ENCODE measurements at regions of chr7 and their contacts with region 1.

Region 1: DNA sequence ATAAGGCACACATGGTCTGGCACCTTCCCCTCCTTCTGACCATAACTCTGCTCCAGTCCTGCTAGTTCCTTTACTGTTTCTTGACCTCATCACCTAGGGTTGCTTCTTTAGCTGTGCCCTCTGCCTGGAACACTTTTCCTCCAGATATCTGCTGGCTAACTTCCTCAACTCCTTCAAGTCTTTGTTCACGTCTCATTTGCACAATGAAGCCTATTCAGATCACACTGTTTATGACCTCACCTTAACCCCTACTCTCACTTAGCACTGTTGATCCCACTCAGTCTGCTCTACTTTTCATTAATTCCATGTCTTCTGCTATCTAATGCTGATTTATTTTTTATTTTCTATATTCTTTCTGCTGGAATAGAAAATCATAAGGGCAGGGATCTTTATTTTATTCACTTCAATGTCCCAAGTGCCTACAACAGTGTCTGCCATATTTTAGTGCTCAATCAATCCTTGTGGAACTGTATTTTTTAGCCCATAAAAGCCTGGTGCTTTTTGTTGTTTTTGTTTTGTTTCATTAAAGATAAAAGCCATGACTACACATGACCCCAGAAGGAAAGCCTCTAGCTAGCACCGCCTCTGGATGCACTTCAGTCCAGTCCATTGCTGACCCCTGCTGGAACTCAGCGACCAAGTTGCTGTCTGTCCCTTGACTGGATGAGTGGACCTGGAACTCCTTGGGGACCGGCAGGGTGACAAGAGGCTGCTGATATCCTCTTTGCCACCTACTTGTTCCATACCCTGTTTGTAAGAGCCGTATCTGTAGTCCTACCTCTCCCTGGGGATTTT is 12.3 kb downstream of the KLF14 start:
- DNase-seq: peak; percentile 82 to 90 (median 85)
- ATAC-seq: peak; percentile 98
- H3K4me3 ChIP-seq: no peak overlapping the region
- H3K27ac ChIP-seq: no peak overlapping the region
- H3K4me1 ChIP-seq: no peaks in the 10 kb centered on the region
- H3K27me3 ChIP-seq: no peaks in the 10 kb centered on the region

Region 2: GRCh38 chr7:130069978-130070860 is 651.5 kb before region 1 on chr7 and contains the start of gene KLHDC10:
- intact Hi-C with region 1: loop called in 1 of 4 experiments (anchors 10 kb)
- DNase-seq: peak; percentile 97 to 98 (median 98)
- ATAC-seq: peak; percentile 99 to 100
- H3K4me3 ChIP-seq: peak within 1 kb of the TSS; percentile 73
- H3K27ac ChIP-seq: peak within 1 kb of the TSS; percentile 69
- H3K4me1 ChIP-seq: no peaks in the 10 kb centered on the region
- H3K27me3 ChIP-seq: no peaks in the 10 kb centered on the region
- total RNA-seq, gene KLHDC10: 24.3 to 29.4 (median 26.5) TPM

Region 3: DNA sequence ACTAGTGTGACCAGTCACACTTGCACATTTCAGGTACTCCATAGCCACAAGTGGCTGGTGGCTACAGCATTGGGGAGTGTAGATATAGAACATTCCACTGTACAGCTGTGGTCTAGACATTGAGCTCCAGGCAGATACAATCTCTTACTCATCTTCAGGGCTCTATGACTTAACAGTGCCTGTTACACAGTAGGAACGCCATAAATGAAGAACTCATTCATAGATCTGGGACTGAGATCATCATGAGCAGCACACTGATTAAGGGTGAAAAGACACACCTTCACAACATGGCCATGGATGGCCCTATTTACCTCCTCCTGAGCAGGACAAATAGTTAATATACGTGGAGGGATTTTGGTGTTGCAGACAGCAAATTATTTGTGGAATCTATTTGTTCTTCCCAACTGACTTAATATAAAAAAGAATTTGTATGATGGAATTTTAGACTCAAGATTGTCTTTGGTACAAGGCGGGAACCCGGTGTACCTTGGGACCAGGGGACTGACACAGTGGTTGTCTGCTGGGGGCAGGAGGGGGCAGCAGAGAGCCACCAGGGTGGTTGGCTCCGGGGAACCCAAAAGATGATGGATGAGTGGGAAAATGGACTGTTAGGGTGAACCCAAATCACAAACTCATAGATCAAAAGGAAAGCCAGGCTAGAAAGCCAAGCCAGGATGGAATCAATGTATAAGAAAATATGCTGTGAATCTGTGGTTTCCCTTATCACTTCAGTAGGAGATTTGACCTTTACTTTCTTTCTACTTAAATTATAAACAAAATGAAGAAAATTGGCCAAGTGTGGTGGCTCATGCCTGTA is 479.3 kb before region 1 on chr7:
- intact Hi-C with region 1: loop called in 1 of 4 experiments (anchors 10 kb)
- DNase-seq: peak; percentile 62 to 83 (median 83)
- ATAC-seq: peak; percentile 79 to 87
- H3K4me3 ChIP-seq: no peak overlapping the region
- H3K27ac ChIP-seq: no peak overlapping the region
- H3K4me1 ChIP-seq: no peaks in the 10 kb centered on the region
- H3K27me3 ChIP-seq: no peaks in the 10 kb centered on the region

Region 4: DNA sequence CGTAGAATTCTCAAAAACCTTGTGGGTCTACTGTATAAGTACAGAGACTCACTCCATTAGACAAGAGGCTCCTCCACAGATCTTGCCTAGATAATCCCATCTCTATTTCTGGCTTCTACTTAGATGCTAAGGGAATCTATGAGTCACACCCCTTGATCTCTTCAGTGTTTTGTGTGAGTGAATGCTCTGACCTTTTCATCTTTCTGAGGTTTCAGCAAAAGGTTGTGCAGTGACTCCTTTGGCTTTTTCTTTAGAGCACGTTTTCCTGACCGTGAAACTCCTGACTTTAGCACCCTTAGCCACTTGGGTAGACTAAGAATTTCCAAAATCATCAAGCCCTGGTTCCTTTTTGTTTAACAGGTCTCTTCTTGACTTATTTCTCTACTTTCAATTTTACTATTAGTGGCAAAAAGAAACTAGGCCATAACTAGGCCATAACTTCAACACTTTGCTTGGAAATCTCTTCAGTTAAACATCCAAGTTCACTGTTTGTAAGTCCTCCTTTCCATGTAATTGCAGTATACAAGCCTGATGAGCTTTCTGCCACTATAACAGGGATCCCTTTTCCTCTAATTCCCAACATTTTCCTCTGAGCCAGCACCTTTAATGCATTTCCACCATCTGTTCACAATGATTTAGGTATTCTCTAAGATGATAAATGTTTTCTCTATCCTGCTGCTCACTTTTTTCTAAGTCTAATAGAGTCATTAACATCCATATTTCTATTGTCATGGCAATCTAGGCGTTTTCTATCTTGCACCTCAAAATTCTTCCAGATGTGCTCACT is 72.5 kb before region 1 on chr7:
- intact Hi-C with region 1: no loop called
- DNase-seq: no peak
- ATAC-seq: no peak
- H3K4me3 ChIP-seq: no peak overlapping the region
- H3K27ac ChIP-seq: no peak overlapping the region
- H3K4me1 ChIP-seq: no peaks in the 10 kb centered on the region
- H3K27me3 ChIP-seq: no peaks in the 10 kb centered on the region

Region 5: DNA sequence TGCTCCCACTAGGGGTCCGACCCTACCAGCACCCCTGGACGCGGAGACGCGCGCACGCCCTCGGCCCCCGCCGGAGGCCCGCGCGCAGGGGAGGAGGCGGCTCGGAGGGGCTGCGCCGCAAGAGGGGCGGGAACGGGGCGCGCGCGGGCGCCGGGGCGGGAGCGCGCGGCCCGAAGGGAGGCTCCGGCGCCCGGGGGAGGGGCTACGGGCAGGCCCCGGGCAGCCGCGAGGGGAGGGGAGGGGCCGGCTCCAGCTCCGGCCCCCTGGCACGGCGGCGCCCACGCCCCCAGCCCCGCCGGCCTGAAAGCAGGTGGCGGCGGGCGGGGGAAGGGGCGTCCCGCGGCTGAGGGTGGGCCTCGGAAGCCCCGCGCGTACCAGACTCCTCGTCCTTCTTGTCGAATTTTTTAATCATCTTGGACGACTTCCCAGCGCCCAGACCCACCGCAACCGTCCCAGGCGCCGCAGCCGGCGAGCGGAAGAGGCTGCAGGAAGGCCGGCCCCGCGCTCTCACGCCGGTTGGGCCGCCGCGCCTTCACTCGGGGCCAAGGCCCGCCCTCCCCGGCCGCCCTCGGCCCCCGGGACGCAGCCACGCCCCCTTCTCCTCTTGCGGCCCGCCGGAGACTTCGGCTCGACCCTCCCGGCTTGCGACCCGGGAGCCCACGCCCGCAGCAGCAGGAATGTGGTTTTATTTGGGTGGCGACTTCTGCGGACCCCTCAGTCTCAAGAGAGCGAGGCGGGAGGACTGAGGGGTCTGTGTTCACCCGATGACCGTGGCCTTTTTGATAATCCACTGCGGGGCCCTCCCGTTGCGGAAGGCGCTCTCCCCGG is 53.2 kb before region 1 on chr7 and contains the start of gene COPG2:
- intact Hi-C with region 1: no loop called
- DNase-seq: peak; percentile 87 to 95 (median 95)
- ATAC-seq: peak; percentile 99
- H3K4me3 ChIP-seq: peak within 1 kb of the TSS; percentile 53
- H3K27ac ChIP-seq: peak within 1 kb of the TSS; percentile 70
- H3K4me1 ChIP-seq: no peaks in the 10 kb centered on the region
- H3K27me3 ChIP-seq: no peaks in the 10 kb centered on the region
- total RNA-seq, gene COPG2: 14.9 to 18.1 (median 15.6) TPM

Measured in right cardiac atrium (tissue), 5 donors.